Dendritic cell treated with granulocyte-macrophage colony-stimulating factor and Interleukin-4, amounts not matched to agents 40 ng/mL and 50 ng/mL, for 4 days (primary cell): ENCODE measurements at regions of chr9 and their contacts with region 1.

Region 1: GRCh38 chr9:98255578-98256296 is at the start of gene TBC1D2:
- H3K4me3 Mint-ChIP-seq: peak within 1 kb of the TSS; percentile 93
- H3K27ac Mint-ChIP-seq: peak within 1 kb of the TSS; percentile 97
- H3K4me1 Mint-ChIP-seq: peaks cover 49% of the 10 kb centered on the region
- H3K27me3 Mint-ChIP-seq: no peaks in the 10 kb centered on the region

Region 2: DNA sequence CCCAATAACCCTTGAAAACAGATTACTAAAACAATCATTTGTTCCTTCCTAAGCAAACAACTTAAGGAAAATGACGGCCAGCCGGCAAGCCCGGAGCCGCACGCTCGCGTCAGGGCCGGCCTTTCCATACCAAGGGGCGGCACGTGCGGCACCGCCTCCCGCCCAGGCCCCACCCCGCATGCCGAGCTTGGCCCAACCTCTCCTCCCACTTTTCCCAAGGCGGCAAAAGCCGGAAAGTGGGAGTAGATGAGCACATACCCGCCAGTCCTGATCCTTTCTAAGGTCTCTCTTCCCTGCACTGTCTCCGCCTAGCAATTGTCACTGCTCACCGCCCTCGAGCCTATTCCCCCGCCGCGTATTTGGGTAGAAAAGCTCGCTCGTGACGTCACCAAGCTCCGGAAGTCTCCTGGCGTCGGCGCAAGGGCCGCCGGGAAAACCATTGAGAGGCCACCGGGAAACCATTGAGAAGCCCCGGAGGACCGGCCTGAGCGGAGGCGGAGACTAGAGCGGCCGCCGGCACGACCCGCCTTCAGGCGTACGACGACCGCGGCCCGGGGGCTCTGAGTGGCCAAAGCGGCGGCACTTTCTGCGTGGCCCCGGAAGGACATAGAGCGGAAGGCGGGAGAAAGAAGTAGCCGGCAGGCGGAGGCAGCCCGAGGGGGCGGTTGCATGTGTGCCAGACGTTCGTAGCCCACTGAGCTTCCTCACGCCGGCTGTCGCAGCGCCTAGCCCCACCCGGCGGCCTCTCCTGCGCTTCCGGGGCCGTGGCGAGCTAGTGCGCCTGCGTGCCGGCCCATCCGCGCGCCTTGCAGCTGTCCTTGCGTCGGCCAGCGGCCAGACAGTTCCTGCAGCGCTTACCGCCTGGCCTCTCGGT is 622.5 kb before region 1 on chr9 and contains the starts of genes NCBP1 and TSTD2:
- intact Hi-C with region 1: loop called (anchors 5 kb)
- H3K4me3 Mint-ChIP-seq: peak within 1 kb of the TSS; percentile 98
- H3K27ac Mint-ChIP-seq: peak within 1 kb of the TSS; percentile 99
- H3K4me1 Mint-ChIP-seq: peaks cover 52% of the 10 kb centered on the region
- H3K27me3 Mint-ChIP-seq: no peaks in the 10 kb centered on the region

Region 3: DNA sequence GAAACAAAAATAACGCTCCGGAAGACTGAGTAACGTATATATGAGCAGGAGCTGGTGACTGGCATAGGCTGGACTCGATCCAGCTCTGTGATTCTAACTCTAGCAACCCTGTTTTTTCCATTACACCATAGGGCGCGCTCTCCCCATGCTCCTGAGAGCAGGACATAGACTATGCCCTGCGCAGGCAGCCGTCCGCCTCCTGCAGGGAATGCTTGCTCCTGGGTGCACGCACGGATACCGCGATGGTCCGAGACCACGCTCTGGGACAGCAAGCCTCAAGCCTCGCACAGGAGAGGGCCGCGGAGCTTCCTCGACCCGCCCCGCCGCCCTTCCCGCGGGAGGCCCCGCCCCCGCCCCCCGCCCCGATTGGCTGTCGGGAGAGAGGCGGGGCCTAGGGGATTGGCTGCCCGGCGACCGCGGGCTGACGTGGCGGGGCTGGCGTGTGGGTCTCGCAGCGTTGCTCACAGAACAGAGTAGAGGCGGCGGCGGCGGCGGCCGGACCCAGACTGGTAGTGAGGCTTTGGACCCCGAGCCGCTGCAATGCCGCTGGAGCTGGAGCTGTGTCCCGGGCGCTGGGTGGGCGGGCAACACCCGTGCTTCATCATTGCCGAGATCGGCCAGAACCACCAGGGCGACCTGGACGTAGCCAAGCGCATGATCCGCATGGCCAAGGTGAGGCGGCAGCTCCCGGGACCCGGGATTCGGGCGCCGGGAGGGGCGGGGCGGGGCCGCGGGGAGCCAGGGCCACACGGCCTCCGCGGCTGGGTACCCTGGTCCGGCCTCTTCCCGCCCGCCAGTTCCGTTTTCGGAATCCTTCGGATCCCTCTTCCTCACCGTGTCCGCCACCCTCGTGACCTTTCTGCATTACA is 199.2 kb before region 1 on chr9 and contains the start of gene NANS:
- intact Hi-C with region 1: loop called (anchors 5 kb)
- H3K4me3 Mint-ChIP-seq: peak within 1 kb of the TSS; percentile 93
- H3K27ac Mint-ChIP-seq: peak within 1 kb of the TSS; percentile 96
- H3K4me1 Mint-ChIP-seq: peaks cover 30% of the 10 kb centered on the region
- H3K27me3 Mint-ChIP-seq: no peaks in the 10 kb centered on the region

Region 4: DNA sequence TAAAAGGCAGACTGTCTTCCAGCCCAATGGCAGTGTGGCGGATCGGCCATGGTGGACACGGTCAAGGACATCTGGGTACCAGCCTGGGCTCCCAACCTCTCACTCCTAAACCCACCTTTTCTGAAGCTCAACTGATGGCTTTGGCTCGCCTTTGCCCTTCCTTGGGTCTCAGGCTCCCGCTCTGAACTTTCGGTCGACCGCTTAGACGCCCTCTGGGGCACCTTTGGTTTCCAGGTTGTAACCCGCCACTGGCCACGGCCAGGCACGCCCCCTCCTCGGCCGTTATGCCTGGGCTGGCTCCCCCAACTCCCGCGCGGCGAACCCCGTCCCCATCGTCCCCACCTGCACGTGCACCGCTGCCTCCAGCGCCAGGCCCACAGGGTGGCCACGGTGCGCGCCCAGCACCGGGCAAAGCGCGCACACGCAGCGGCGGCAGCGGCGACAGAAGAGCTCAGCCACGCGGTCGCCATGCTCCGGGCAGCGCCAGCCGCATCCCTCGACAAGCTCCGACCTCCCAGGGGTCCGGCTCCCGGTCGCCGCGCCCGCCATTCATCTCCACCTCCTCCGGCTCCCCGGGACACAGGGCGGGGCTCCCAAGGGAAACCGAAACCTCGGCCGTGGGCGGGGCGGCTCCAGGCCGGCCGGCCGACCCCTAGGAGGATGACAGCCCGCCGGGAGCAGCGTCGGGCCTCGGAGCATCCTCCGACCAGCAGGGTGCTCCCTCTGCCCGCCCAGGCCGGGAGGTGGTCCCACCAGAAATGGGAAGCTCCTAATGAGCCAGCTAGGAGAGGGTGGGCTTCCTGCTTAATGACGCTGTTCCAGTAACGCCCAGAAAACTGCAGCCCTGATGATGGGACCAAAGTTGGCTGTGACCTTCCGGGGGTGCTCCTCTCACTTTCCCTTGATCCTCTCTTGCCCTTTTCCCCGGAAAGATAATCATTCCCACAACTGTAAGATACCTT is 136.8 kb before region 1 on chr9 and contains the start of gene TRIM14:
- intact Hi-C with region 1: loop called (anchors 2 kb)
- H3K4me3 Mint-ChIP-seq: peak within 1 kb of the TSS; percentile 83
- H3K27ac Mint-ChIP-seq: peak within 1 kb of the TSS; percentile 93
- H3K4me1 Mint-ChIP-seq: peaks cover 57% of the 10 kb centered on the region
- H3K27me3 Mint-ChIP-seq: no peaks in the 10 kb centered on the region

Region 5: GRCh38 chr9:98168941-98169488 is 86.7 kb before region 1 on chr9:
- intact Hi-C with region 1: no loop called
- H3K4me3 Mint-ChIP-seq: no peak overlapping the region
- H3K27ac Mint-ChIP-seq: peak overlapping the region; percentile 29
- H3K4me1 Mint-ChIP-seq: peaks cover 30% of the 10 kb centered on the region
- H3K27me3 Mint-ChIP-seq: no peaks in the 10 kb centered on the region

Region 6: GRCh38 chr9:98380065-98380681 is 124.4 kb after region 1 on chr9:
- intact Hi-C with region 1: no loop called
- H3K4me3 Mint-ChIP-seq: no peak overlapping the region
- H3K27ac Mint-ChIP-seq: no peak overlapping the region
- H3K4me1 Mint-ChIP-seq: peaks cover 2% of the 10 kb centered on the region
- H3K27me3 Mint-ChIP-seq: no peaks in the 10 kb centered on the region

Region 7: GRCh38 chr9:98712987-98713386 is 457.2 kb after region 1 on chr9:
- intact Hi-C with region 1: no loop called
- H3K4me3 Mint-ChIP-seq: no peak overlapping the region
- H3K27ac Mint-ChIP-seq: no peak overlapping the region
- H3K4me1 Mint-ChIP-seq: no peaks in the 10 kb centered on the region
- H3K27me3 Mint-ChIP-seq: peaks cover 58% of the 10 kb centered on the region